ENCODE measurements at regions of chr9 and their contacts with region 1.

Region 1: DNA sequence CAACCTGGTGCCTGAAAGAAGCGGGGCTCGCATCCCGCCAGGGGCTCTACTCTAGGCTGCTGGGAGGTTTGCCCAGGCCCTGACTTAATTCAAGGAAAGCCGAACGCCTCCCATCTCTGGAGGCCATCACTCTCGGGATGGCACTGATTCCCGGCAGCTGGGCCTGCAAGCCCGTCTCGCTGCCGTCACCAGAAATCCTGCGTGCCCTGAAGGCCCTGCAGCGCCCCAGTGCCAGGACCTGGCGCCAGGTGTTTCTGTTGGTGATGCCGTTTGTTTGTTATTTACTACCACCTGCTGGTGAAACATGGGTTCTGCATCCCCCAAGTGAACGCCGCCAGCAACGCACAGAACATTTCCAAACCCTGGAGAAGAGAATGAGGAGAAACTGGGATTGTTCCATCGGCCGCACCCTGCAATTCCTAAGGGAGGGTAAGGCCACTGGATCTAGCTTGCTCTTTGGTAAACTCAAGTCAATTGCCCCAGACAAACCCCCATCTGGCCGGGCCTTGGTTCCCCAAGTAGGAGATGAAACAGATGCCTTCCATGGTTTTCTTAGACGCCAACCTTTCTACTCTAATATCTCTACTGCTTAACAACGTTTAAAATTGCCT is 77.9 kb downstream of the AK8 start:
- DNase-seq: peak; percentile 35 to 62 (median 47)
- H3K4me3 ChIP-seq: no peak overlapping the region
- H3K4me3 Mint-ChIP-seq: peak overlapping the region in 1 of 2 donors; percentile 42
- H3K27ac ChIP-seq: no peak overlapping the region
- H3K27ac Mint-ChIP-seq: no peak overlapping the region
- H3K4me1 ChIP-seq: peaks cover 3 to 4% of the 10 kb centered on the region in 2 donors
- H3K4me1 Mint-ChIP-seq: peaks cover 12% of the 10 kb centered on the region
- H3K27me3 ChIP-seq: peaks cover 0 to 16% of the 10 kb centered on the region in 2 donors
- H3K27me3 Mint-ChIP-seq: peaks cover 22 to 28% (median 23%) of the 10 kb centered on the region in 3 donors
- CTCF ChIP-seq: peak; percentile 95

Region 2: DNA sequence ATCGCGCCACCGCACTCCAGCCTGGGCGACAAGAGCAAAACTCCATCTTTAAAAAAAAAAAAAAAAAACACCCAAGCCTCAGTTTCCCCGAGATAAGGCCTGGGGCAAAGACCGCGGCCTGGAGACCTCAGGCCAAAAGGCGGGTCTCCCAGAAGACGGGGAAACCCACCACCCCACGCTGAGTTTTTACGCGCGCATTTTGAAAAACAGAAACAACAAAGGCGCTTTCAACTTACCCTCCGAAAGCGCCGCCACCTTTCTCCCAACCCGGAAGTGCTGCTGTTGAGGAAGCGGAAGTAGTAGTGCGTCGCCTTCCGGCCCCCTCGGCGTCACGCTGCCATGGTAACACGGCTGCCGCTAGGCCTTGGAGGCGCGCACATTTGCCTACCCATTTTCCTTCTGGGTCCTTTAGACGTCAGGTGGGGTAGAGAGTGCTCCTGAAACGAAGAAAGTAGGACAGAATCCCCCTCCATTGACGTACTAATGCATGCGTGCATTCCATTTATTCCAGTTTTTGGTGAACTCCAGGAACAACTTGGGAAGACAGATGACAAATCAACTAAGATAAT is 393.5 kb before region 1 on chr9 and contains the start of gene TTF1:
- intact Hi-C with region 1: loop called (anchors 2 to 5 kb)
- DNase-seq: peak; percentile 91 to 95 (median 93)
- H3K4me3 ChIP-seq: peak within 1 kb of the TSS; percentile 48 to 93 (median 87)
- H3K4me3 Mint-ChIP-seq: peak within 1 kb of the TSS; percentile 92 to 94
- H3K27ac ChIP-seq: peak within 1 kb of the TSS; percentile 3 to 68
- H3K27ac Mint-ChIP-seq: peak within 1 kb of the TSS; percentile 79 to 92 (median 86)
- H3K4me1 ChIP-seq: peaks cover 39 to 41% of the 10 kb centered on the region in 2 donors
- H3K4me1 Mint-ChIP-seq: peaks cover 43% of the 10 kb centered on the region
- H3K27me3 ChIP-seq: peaks cover 22 to 32% of the 10 kb centered on the region in 2 donors
- H3K27me3 Mint-ChIP-seq: peaks cover 24 to 32% (median 31%) of the 10 kb centered on the region in 3 donors
- CTCF ChIP-seq: no peak
- polyA plus RNA-seq, gene TTF1: 2.2 to 5.8 (median 4.1) TPM

Region 3: GRCh38 chr9:132507746-132508469 is 292.2 kb before region 1 on chr9:
- intact Hi-C with region 1: loop called (anchors 1 to 5 kb)
- DNase-seq: peak; percentile 19 to 44 (median 25)
- H3K4me3 ChIP-seq: no peak overlapping the region
- H3K4me3 Mint-ChIP-seq: peak overlapping the region in 1 of 2 donors; percentile 26
- H3K27ac ChIP-seq: no peak overlapping the region
- H3K27ac Mint-ChIP-seq: no peak overlapping the region
- H3K4me1 ChIP-seq: peaks cover 13 to 14% of the 10 kb centered on the region in 2 donors
- H3K4me1 Mint-ChIP-seq: peaks cover 15% of the 10 kb centered on the region
- H3K27me3 ChIP-seq: peaks cover 0 to 7% of the 10 kb centered on the region in 2 donors
- H3K27me3 Mint-ChIP-seq: peaks cover 13 to 28% (median 17%) of the 10 kb centered on the region in 3 donors
- CTCF ChIP-seq: peak; percentile 73

Region 4: DNA sequence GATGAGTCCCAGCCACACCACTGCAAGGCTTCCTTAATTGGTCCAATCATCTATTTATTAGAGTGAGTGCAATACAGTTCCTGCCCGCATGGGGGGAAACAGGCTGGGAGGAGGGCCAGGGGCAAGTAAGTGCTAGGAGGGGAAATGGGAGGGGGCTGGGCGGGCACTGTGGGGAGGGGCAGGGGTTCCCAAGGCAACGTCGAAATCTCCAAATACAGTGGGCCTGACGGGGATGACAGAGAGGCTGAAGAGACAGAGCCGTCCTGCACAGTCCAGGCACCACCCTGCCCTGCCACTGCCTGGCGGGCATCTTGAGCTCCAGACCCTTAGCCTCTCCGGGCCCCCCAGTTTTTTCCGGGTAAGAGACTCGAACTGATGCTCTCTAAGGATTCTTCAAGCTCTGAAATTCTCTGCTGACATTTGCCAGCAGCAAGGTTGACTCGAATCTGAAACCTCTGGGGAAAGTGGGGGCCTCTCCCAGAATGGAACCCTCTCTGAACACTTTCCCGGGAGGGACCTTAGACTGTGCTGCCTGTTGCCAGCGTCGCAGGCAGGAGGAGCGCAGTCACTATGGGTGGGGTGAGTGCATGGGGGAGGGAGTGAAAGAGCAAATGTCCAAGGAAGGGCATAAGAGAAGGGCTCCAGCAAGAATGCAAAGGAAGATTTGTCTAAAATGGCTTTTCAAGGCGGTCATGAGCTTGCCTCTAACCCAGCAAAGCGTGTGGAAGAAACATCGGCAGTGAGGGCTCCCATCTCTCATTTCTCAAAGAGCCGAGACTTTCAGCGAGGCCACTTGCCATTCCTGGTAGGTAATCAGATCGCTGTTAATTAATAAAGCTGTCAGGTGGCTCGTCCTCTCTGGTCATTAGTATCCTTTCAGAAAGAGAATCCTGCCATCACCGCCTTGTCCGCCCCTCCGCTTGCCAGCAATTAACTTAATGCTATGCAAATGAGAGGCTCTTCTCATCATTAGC is 30.9 kb before region 1 on chr9:
- intact Hi-C with region 1: loop called in 1 of 2 experiments (anchors 1 kb)
- DNase-seq: peak; percentile 35 to 60 (median 53)
- H3K4me3 ChIP-seq: peak overlapping the region; percentile 73 to 100 (median 97)
- H3K4me3 Mint-ChIP-seq: peak overlapping the region; percentile 99 to 100
- H3K27ac ChIP-seq: peak overlapping the region; percentile 52 to 94
- H3K27ac Mint-ChIP-seq: peak overlapping the region; percentile 85 to 97 (median 94)
- H3K4me1 ChIP-seq: peaks cover 7 to 19% of the 10 kb centered on the region in 2 donors
- H3K4me1 Mint-ChIP-seq: peaks cover 12% of the 10 kb centered on the region
- H3K27me3 ChIP-seq: no peaks in the 10 kb centered on the region
- H3K27me3 Mint-ChIP-seq: peaks cover 0 to 8% (median 6%) of the 10 kb centered on the region in 3 donors
- CTCF ChIP-seq: peak; percentile 78

Region 5: GRCh38 chr9:132877824-132878694 is 77.9 kb after region 1 on chr9 and contains the start of gene AK8:
- intact Hi-C with region 1: no loop called
- DNase-seq: peak; percentile 62 to 75 (median 67)
- H3K4me3 ChIP-seq: peak within 1 kb of the TSS; percentile 80 to 97 (median 93)
- H3K4me3 Mint-ChIP-seq: peak within 1 kb of the TSS; percentile 79 to 80
- H3K27ac ChIP-seq: peak within 1 kb of the TSS in 1 of 2 donors; percentile 73
- H3K27ac Mint-ChIP-seq: peak within 1 kb of the TSS in 5 of 7 donors; percentile 33 to 88 (median 78)
- H3K4me1 ChIP-seq: peaks cover 13 to 25% of the 10 kb centered on the region in 2 donors
- H3K4me1 Mint-ChIP-seq: peaks cover 15% of the 10 kb centered on the region
- H3K27me3 ChIP-seq: peaks cover 0 to 9% of the 10 kb centered on the region in 2 donors
- H3K27me3 Mint-ChIP-seq: peaks cover 10 to 17% (median 17%) of the 10 kb centered on the region in 3 donors
- CTCF ChIP-seq: no peak
- polyA plus RNA-seq, gene AK8: 0.08 TPM in 1 of 3 donors, not detected in the others

Measured in CD14-positive monocyte (primary cell).